Head of caudate nucleus (tissue), 42 donors: ENCODE measurements at regions of chr21 and their contacts with region 1.

Region 1: GRCh38 chr21:16082038-16082816 is 352.4 kb downstream of the USP25 start:
- DNase-seq: no peak

Region 2: GRCh38 chr21:16186742-16187141 is 104.5 kb after region 1 on chr21:
- intact Hi-C with region 1: loop called (anchors 10 kb)
- DNase-seq: no peak

Region 3: GRCh38 chr21:16330082-16330907 is 248.1 kb after region 1 on chr21:
- intact Hi-C with region 1: loop called (anchors 5 kb)
- DNase-seq: peak in 20 of 42 donors; percentile 8 to 79 (median 45)